Stomach (tissue), 19 donors: ENCODE measurements at regions of chr12 and their contacts with region 1.

Region 1: GRCh38 chr12:12975322-12976077 is 23.5 kb upstream of the GPRC5D start:
- DNase-seq: peak; percentile 46 to 68
- H3K4me3 ChIP-seq: no peak overlapping the region
- H3K27ac ChIP-seq: peak overlapping the region in 4 of 5 donors; percentile 9 to 70 (median 62)
- H3K4me1 ChIP-seq: peaks cover 0 to 14% (median 8%) of the 10 kb centered on the region in 4 donors
- H3K27me3 ChIP-seq: no peaks in the 10 kb centered on the region
- CTCF ChIP-seq: peak in 2 of 7 experiments; percentile 7 to 41
- EP300 ChIP-seq: no peak
- POLR2A ChIP-seq: no peak

Region 2: GRCh38 chr12:12916135-12916944 is 59.2 kb before region 1 on chr12:
- intact Hi-C with region 1: loop called (anchors 10 kb)
- DNase-seq: peak; percentile 88 to 92
- H3K4me3 ChIP-seq: no peak overlapping the region
- H3K27ac ChIP-seq: peak overlapping the region in 2 of 5 donors; percentile 28 to 43
- H3K4me1 ChIP-seq: peaks cover 0 to 14% (median 10%) of the 10 kb centered on the region in 4 donors
- H3K27me3 ChIP-seq: no peaks in the 10 kb centered on the region
- CTCF ChIP-seq: peak in 6 of 7 experiments; percentile 37 to 98 (median 97)
- EP300 ChIP-seq: no peak
- POLR2A ChIP-seq: no peak